ENCODE measurements at regions of chr17 and their contacts with region 1.

Region 1: GRCh38 chr17:28717578-28718333 is at the start of gene RAB34:
- DNase-seq: no peak
- H3K4me3 ChIP-seq: no peak within 1 kb of the TSS
- H3K4me3 Mint-ChIP-seq: peak within 1 kb of the TSS; percentile 49 to 71 (median 53)
- H3K27ac ChIP-seq: no peak within 1 kb of the TSS
- H3K27ac Mint-ChIP-seq: peak within 1 kb of the TSS in 5 of 7 donors; percentile 52 to 96 (median 74)
- H3K4me1 ChIP-seq: peaks cover 38% of the 10 kb centered on the region
- H3K4me1 Mint-ChIP-seq: peaks cover 24 to 46% (median 35%) of the 10 kb centered on the region in 4 donors
- H3K27me3 ChIP-seq: peaks cover 11% of the 10 kb centered on the region
- H3K27me3 Mint-ChIP-seq: peaks cover 9 to 18% of the 10 kb centered on the region in 2 donors
- total RNA-seq, gene RAB34: 4.0 to 6.3 TPM

Region 2: GRCh38 chr17:28571255-28572122 is 146.3 kb before region 1 on chr17 and contains the start of gene PIGS:
- CTCF ChIA-PET with region 1: no interaction called
- POLR2A ChIA-PET with region 1: interaction called, 12 read pairs
- intact Hi-C with region 1: no loop called
- DNase-seq: peak; percentile 84 to 93 (median 87)
- H3K4me3 ChIP-seq: peak within 1 kb of the TSS; percentile 59 to 93
- H3K4me3 Mint-ChIP-seq: peak within 1 kb of the TSS; percentile 96 to 99 (median 97)
- H3K27ac ChIP-seq: peak within 1 kb of the TSS; percentile 79
- H3K27ac Mint-ChIP-seq: peak within 1 kb of the TSS; percentile 80 to 98 (median 97)
- H3K4me1 ChIP-seq: peaks cover 68% of the 10 kb centered on the region
- H3K4me1 Mint-ChIP-seq: peaks cover 41 to 82% (median 57%) of the 10 kb centered on the region in 4 donors
- H3K27me3 ChIP-seq: no peaks in the 10 kb centered on the region
- H3K27me3 Mint-ChIP-seq: no peaks in the 10 kb centered on the region
- total RNA-seq, gene PIGS: 57.9 to 58.2 TPM

Region 3: GRCh38 chr17:28644985-28645939 is 72.5 kb before region 1 on chr17 and contains the start of gene BLTP2:
- CTCF ChIA-PET with region 1: interaction called, 4 read pairs
- POLR2A ChIA-PET with region 1: interaction called, 24 read pairs
- intact Hi-C with region 1: loop called (anchors 2 kb)
- DNase-seq: peak; percentile 93 to 95 (median 94)
- H3K4me3 ChIP-seq: peak within 1 kb of the TSS; percentile 45 to 98
- H3K4me3 Mint-ChIP-seq: peak within 1 kb of the TSS; percentile 86 to 96 (median 92)
- H3K27ac ChIP-seq: peak within 1 kb of the TSS; percentile 91
- H3K27ac Mint-ChIP-seq: peak within 1 kb of the TSS; percentile 93 to 99 (median 98)
- H3K4me1 ChIP-seq: peaks cover 47% of the 10 kb centered on the region
- H3K4me1 Mint-ChIP-seq: peaks cover 31 to 45% (median 37%) of the 10 kb centered on the region in 4 donors
- H3K27me3 ChIP-seq: no peaks in the 10 kb centered on the region
- H3K27me3 Mint-ChIP-seq: no peaks in the 10 kb centered on the region
- total RNA-seq, gene BLTP2: 132 to 149 TPM

Region 4: DNA sequence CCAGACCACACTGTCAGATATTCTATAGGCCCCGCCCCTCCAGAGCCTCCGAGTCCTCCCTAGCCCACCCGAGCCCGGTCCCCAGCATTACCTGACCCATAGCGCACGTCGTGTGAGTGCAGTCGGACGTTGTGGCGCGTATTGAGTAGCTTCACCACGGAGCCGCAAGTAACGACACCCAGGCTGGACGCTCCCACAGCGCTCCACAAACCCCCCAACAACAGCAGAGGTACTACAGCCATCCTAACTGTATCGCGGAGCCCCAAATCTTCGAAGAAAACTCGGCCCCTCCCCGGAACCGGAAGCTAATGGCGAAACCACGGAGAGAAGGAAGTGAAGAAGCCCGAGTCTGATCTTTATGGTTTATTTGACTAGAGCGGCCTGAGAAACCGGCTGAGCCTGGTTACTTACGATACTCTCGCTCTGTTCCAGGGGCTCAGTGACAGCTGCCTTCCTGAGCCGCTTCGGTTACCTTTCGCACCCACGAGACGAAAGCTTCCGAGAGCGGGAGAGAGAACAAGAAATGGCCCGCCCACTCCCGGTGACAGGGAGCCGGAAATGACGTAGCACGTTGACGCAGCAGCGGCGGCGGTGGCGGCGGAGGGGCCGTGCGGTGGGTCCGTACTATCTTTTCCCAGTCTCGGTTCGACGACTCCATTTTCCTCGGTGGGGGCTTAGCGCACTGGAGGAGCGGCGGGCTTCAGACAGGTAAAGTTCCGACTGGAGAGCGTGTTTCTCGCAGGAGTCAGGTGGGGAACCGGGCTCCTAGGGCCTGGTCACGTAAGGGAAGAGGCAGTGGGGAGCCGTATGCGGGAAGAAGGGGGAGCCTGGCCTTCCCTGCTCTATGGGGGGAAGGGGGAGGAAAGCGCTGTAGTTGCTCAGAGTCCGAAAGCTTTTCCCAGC is 55.9 kb before region 1 on chr17 and contains the starts of genes SDF2 and SUPT6H:
- CTCF ChIA-PET with region 1: no interaction called
- POLR2A ChIA-PET with region 1: interaction called, 15 read pairs
- intact Hi-C with region 1: no loop called
- DNase-seq: peak; percentile 94 to 96 (median 95)
- H3K4me3 ChIP-seq: peak within 1 kb of the TSS; percentile 92 to 99
- H3K4me3 Mint-ChIP-seq: peak within 1 kb of the TSS; percentile 99 to 100 (median 100)
- H3K27ac ChIP-seq: peak within 1 kb of the TSS; percentile 99
- H3K27ac Mint-ChIP-seq: peak within 1 kb of the TSS; percentile 97 to 100 (median 100)
- H3K4me1 ChIP-seq: peaks cover 51% of the 10 kb centered on the region
- H3K4me1 Mint-ChIP-seq: peaks cover 42 to 68% (median 56%) of the 10 kb centered on the region in 4 donors
- H3K27me3 ChIP-seq: no peaks in the 10 kb centered on the region
- H3K27me3 Mint-ChIP-seq: no peaks in the 10 kb centered on the region
- total RNA-seq, gene SDF2: 41.5 to 48.1 TPM
- total RNA-seq, gene SUPT6H: 96.5 to 102 TPM

Region 5: DNA sequence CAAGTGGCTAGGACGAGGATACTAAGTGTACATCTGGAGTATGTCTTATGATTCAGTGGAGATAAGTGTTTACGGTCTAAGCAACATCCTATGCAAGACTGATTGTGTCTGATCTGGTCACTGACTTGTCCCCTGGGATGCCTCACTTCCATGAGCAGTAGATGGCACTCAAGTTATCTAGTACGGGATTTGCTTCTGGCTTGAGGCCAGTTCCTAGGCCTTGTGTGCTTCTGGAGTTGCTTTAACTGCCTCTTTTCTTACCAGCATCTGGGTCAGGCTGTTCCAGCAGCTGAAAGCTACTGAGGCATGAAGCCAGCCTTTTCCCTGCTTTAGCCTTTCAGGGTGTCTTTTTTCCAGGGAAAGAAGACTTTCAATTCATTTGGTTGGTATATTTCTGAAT is 32.8 kb before region 1 on chr17:
- CTCF ChIA-PET with region 1: no interaction called
- POLR2A ChIA-PET with region 1: no interaction called
- intact Hi-C with region 1: no loop called
- DNase-seq: no peak
- H3K4me3 ChIP-seq: no peak overlapping the region
- H3K4me3 Mint-ChIP-seq: no peak overlapping the region
- H3K27ac ChIP-seq: no peak overlapping the region
- H3K27ac Mint-ChIP-seq: peak overlapping the region in 1 of 7 donors; percentile 49
- H3K4me1 ChIP-seq: no peaks in the 10 kb centered on the region
- H3K4me1 Mint-ChIP-seq: peaks cover 0 to 6% (median 0%) of the 10 kb centered on the region in 4 donors
- H3K27me3 ChIP-seq: no peaks in the 10 kb centered on the region
- H3K27me3 Mint-ChIP-seq: no peaks in the 10 kb centered on the region

Region 6: DNA sequence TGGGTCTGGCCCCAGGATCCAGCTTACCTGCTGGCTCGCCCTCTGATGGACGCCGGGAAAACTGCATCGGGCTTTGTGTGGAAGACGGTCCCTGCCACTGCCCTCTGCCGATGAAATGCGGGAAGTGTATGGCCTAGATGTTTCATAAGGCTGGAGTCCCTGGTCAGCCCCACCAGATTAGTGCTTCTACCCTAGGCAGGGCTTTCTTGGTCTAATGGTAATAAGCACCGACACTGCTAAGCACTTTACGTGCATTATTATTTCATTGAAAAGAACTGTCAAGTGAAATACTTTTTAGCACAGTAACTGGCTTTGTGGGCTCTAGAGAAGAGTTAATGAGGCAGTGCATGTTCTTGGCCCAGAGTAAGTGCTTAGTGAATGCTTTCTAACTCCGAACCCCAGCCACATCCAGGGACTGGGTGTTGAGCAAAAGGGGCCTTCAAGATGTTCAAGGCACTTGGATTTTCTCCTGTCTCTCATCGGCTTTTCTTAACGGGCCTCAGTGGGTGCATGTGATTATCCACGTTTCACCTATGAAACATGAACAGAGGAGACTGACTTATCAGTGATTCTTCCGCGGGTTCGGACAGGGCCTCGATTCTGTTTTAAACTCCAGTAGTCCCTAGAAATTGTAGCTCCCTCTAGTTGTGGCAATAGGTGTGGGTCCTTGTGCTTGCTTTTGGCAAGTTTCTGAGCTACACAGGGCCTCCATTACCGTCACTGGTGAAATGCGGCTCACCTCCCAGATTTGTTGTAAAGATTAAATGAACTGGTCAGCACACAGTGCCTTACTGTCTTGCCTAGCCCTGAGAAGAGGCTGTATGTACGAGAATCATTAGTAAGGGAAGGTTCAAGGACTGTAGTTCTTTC is 32.7 kb after region 1 on chr17:
- CTCF ChIA-PET with region 1: interaction called, 21 read pairs
- POLR2A ChIA-PET with region 1: interaction called, 528 read pairs
- intact Hi-C with region 1: no loop called
- DNase-seq: peak; percentile 82 to 89 (median 85)
- H3K4me3 ChIP-seq: no peak overlapping the region
- H3K4me3 Mint-ChIP-seq: peak overlapping the region in 1 of 8 donors; percentile 49
- H3K27ac ChIP-seq: peak overlapping the region; percentile 10
- H3K27ac Mint-ChIP-seq: peak overlapping the region in 6 of 7 donors; percentile 17 to 85 (median 70)
- H3K4me1 ChIP-seq: peaks cover 13% of the 10 kb centered on the region
- H3K4me1 Mint-ChIP-seq: peaks cover 7 to 18% (median 11%) of the 10 kb centered on the region in 4 donors
- H3K27me3 ChIP-seq: no peaks in the 10 kb centered on the region
- H3K27me3 Mint-ChIP-seq: no peaks in the 10 kb centered on the region

Region 7: GRCh38 chr17:29140051-29140621 is 422.4 kb after region 1 on chr17:
- CTCF ChIA-PET with region 1: no interaction called
- POLR2A ChIA-PET with region 1: interaction called, 5 read pairs
- intact Hi-C with region 1: loop called (anchors 5 kb)
- DNase-seq: peak; percentile 65 to 92 (median 69)
- H3K4me3 ChIP-seq: peak overlapping the region; percentile 55 to 72
- H3K4me3 Mint-ChIP-seq: peak overlapping the region; percentile 90 to 98 (median 92)
- H3K27ac ChIP-seq: peak overlapping the region; percentile 81
- H3K27ac Mint-ChIP-seq: peak overlapping the region; percentile 91 to 99 (median 97)
- H3K4me1 ChIP-seq: peaks cover 69% of the 10 kb centered on the region
- H3K4me1 Mint-ChIP-seq: peaks cover 49 to 82% (median 63%) of the 10 kb centered on the region in 4 donors
- H3K27me3 ChIP-seq: no peaks in the 10 kb centered on the region
- H3K27me3 Mint-ChIP-seq: no peaks in the 10 kb centered on the region

Measured in CD4-positive, alpha-beta memory T cell (primary cell).